ENCODE measurements at regions of chr7 and their contacts with region 1.

Region 1: GRCh38 chr7:105759670-105760550 is 116.5 kb downstream of the ATXN7L1 start:
- DNase-seq: peak; percentile 76
- H3K4me3 ChIP-seq: no peak overlapping the region
- H3K27ac ChIP-seq: no peak overlapping the region
- H3K4me1 ChIP-seq: peaks cover 0 to 11% (median 7%) of the 10 kb centered on the region in 4 donors
- H3K27me3 ChIP-seq: no peaks in the 10 kb centered on the region
- CTCF ChIP-seq: peak; percentile 9 to 69 (median 55)
- EP300 ChIP-seq: no peak
- POLR2A ChIP-seq: no peak

Region 2: DNA sequence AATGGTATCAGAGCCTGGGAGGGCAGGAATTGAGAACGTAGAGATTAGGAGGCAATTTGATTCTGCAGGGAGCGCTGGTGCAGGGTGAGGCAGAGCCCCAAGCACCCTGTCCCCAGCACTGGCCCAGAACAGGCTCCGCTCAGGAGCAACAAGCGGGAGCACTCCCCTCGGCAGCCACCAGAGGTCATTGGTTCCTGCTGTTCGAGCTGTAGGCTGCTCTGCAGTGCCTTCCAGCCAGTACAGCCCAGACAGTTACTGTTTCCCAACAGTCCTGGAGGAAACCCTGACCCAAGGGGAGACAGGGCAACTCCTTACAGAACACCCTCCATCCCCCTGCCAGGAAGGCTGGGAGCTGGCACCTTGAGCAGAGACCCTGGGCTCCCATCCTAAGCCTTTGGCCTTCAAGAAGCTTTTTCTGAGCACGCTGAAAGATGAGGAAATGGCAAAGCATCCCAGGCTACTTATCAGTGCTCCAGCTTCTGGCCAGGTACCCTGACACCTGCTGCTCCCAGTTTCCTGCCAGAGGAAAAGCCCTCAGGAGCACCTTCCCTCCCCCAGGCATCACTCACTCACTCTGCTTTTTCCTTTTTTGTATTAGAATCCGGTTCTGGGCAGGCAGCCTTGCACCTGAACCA is 107.4 kb before region 1 on chr7:
- intact Hi-C with region 1: loop called (anchors 5 kb)
- DNase-seq: peak; percentile 92
- H3K4me3 ChIP-seq: no peak overlapping the region
- H3K27ac ChIP-seq: no peak overlapping the region
- H3K4me1 ChIP-seq: peaks cover 0 to 48% (median 36%) of the 10 kb centered on the region in 4 donors
- H3K27me3 ChIP-seq: no peaks in the 10 kb centered on the region
- CTCF ChIP-seq: peak; percentile 76 to 91 (median 84)
- EP300 ChIP-seq: no peak
- POLR2A ChIP-seq: no peak